Activated T-helper 2 cell treated with anti-CD3 and anti-CD28 coated beads, Interferon-gamma antibody, Interleukin-2, Interleukin-4, amounts not matched to agents 10 μg/mL and 5 μg/mL and 100 μg/mL, durations not matched to agents 14 hours and 24 hours and 36 hours (primary cell): ENCODE measurements at regions of chr11 and their contacts with region 1.

Region 1: DNA sequence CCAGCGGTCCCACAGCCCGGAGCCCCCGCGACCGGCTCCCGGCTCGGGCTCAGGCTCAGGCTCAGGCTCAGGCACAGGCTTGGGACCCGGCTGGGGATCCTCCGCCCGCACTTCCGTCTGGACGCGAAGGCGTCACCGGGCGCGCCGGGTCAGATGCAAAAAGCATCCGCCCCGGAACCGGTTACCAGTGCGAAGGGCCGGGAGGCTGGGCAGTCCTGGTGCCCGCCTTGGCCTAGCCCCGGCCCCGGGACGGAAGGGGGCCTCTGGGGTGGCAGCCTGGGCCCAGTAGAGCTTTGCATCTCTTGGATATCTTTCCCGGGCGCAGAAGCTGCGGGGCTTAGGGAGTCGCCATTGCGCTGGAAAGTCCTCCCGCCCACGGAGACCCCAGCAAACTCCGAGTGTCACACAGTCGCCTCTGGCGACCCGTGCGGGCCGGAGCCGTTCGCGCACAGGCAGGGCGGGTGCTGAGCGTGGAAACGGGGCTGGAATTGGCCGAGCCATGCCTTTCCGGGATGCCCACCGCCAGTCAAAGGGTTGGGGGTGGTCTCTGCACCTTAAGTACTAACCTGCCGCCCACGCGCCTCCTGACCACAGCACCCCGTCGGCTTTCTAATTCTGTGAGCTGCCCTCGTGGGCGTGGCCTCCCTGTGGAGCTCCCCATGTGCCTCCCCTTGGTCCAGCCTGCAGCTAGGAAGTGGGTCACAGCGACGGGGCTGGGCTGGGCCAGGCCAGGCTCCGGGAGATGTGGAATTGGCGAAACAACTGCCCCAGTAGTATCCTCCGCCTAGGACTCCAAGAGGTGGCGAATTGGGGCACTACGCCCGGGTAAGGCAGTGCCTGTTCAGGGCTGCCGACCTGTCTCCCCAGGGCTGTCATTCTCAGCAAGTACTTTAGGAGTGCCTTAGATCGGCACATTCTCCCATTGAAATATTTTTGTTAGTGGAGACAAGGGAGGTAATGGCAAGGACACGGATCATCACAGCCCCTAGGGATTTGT is at the start of gene TMEM9B:
- DNase-seq: peak; percentile 79
- H3K4me3 Mint-ChIP-seq: peak within 1 kb of the TSS; percentile 95
- H3K27ac Mint-ChIP-seq: peak within 1 kb of the TSS; percentile 92
- H3K4me1 Mint-ChIP-seq: peaks cover 32% of the 10 kb centered on the region
- H3K27me3 Mint-ChIP-seq: no peaks in the 10 kb centered on the region
- total RNA-seq, gene TMEM9B: 20.8 and 21.9 TPM in 2 replicates

Region 2: DNA sequence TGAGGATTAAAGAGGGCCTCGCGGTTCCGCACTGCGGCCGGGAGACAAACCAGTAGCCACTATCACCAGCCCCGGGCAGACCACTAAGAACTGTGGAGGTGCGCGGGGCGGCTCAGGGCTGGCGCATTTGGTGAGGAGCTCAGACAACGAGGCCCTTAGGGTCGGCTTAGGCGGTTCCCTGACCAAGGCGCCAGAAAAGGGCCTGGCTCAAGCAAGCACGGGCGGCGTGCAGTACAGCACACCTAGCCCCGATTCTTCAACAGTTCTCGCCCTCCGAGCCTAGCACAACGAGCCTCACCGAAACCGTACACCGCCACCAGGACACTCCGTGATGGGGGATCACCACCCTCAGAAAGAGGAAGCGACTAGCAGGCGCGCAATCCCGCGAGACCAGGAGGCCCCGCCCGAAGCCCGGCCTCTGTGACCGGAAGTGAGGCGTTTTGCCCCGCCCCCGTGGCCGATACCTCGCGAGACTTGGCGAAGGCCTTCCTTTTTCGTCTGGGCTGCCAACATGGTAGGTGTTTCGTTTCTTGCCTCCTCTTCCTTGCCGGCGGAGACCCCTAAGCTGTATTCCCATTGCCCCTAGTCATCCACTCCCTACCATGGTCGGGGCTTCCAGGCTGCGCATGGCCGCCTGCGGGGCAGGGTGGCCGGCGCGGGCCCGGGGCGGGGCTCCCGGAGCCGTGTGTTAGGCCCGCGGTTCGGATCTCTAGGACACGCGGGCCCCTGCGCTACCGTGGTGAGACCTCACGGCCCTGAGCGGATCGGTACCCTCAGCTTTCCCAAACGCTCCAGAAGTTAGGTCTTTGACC is 282.1 kb before region 1 on chr11 and contains the starts of genes RPL27A and TRIM66:
- intact Hi-C with region 1: loop called (anchors 2 kb)
- DNase-seq: peak; percentile 98
- H3K4me3 Mint-ChIP-seq: peak within 1 kb of the TSS; percentile 96
- H3K27ac Mint-ChIP-seq: peak within 1 kb of the TSS; percentile 92
- H3K4me1 Mint-ChIP-seq: peaks cover 36% of the 10 kb centered on the region
- H3K27me3 Mint-ChIP-seq: no peaks in the 10 kb centered on the region
- total RNA-seq, gene RPL27A: 749 and 766 TPM in 2 replicates
- total RNA-seq, gene TRIM66: 13.6 and 14.6 TPM in 2 replicates

Region 3: DNA sequence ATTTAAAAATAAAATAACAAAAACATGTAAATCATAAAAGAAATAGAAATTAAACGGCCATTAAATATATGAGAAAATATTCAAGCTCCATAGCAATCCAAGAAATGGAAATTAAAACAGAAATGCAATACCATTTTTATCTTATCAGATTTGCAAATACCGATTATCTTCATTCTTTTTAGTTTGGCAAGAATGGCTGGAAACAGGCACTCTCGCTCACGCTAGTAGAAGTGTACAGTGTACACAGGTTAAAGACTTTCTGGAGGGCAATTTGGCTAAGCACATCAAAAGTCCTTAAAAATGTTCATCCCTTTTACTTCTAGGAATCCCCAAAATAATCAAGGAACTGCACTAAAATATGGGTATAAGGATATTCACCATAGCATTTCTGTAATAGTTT is 113.3 kb before region 1 on chr11:
- intact Hi-C with region 1: no loop called
- DNase-seq: no peak
- H3K4me3 Mint-ChIP-seq: no peak overlapping the region
- H3K27ac Mint-ChIP-seq: no peak overlapping the region
- H3K4me1 Mint-ChIP-seq: no peaks in the 10 kb centered on the region
- H3K27me3 Mint-ChIP-seq: peaks cover 19% of the 10 kb centered on the region

Region 4: GRCh38 chr11:8911029-8911826 is 53.4 kb before region 1 on chr11 and contains the start of gene AKIP1:
- intact Hi-C with region 1: loop called (anchors 1 kb)
- DNase-seq: peak; percentile 73
- H3K4me3 Mint-ChIP-seq: peak within 1 kb of the TSS; percentile 94
- H3K27ac Mint-ChIP-seq: peak within 1 kb of the TSS; percentile 82
- H3K4me1 Mint-ChIP-seq: peaks cover 36% of the 10 kb centered on the region
- H3K27me3 Mint-ChIP-seq: peaks cover 30% of the 10 kb centered on the region
- total RNA-seq, gene AKIP1: 22.2 and 23.4 TPM in 2 replicates

Region 5: DNA sequence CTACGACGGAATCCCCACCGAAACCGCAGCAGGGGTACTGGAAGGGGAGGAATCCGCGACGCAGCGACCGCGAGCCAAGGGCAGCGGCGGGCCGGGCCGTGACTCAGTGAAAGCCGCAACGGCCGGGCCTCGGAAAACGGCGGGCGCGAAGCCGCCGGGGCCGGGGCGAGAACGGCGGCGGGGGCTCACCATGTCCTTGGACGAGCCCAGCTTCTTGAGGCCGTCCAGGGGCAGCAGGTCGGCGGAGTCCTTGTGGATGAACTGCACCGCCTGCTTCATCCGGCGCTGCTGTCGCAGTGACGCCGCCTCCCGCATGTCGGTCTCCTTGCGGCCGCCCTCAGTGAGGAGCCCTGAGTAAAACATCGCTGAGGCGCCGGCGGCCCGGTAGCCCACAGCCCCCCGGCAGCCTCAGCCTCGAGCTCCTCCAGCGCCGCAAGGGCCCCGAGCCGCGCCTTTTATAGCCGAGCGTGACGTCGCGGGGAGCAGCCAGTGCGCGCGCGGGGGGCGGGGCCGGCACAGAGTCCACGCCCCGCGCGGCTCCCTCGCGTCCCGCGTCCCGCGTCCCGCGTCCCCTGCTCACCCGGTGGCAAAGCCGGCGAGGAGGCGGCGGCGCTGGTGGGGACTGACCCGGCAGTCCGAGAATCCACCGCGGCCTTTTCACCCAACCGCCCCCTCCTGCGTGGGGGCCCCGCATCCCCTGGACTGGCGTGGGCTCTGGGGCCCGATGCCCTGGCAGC is 39.1 kb after region 1 on chr11 and contains the start of gene NRIP3:
- intact Hi-C with region 1: loop called (anchors 1 kb)
- DNase-seq: peak; percentile 71
- H3K4me3 Mint-ChIP-seq: peak within 1 kb of the TSS; percentile 75
- H3K27ac Mint-ChIP-seq: peak within 1 kb of the TSS; percentile 23
- H3K4me1 Mint-ChIP-seq: peaks cover 29% of the 10 kb centered on the region
- H3K27me3 Mint-ChIP-seq: peaks cover 51% of the 10 kb centered on the region
- total RNA-seq, gene NRIP3: 5.0 and 5.5 TPM in 2 replicates